ENCODE measurements at regions of chr10 and their contacts with region 1.

Region 1: DNA sequence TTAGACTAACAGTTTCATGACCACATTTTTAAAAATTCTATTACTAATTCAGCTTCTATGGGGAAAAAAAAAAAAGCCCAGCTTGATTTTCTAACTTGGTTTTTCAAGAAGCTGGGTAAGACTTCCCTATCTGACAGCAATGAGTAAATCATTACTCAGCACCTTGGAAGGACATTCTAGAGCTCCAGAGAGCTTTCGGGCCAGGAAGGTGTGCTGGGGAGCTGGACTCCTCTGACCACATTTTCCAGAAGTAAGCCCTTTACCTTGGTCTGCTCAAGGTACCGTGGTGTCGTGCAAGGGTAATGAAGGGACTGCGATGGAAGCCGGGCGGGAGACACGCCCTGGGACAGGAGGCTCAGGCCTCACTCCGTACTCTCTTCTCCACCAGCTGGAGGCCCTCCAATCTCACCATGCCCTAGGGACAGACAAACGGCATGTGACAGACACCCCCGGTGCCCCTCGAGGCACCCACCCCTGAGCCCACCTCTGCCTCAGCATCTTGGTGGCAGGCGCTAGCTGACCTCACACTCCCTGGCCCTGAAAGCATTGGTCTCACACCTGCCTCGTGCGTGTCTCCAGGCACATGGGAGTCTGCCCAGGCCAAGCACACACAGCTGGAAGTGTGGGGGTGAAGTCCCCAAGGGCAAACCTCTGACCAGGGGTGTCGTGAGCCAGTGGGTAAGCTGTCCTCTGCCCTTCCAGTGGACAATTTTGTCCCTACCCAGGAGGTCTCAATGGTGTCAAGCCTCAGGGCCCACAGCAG is 152.1 kb downstream of the OAT start:
- DNase-seq: no peak
- H3K4me3 ChIP-seq: no peak overlapping the region
- H3K27ac ChIP-seq: no peak overlapping the region
- H3K4me1 ChIP-seq: no peaks in the 10 kb centered on the region
- H3K27me3 ChIP-seq: no peaks in the 10 kb centered on the region
- CTCF ChIP-seq: no peak

Region 2: GRCh38 chr10:124083047-124083739 is 183.5 kb before region 1 on chr10:
- CTCF ChIA-PET with region 1: no interaction called
- POLR2A ChIA-PET with region 1: interaction called, 11 read pairs
- intact Hi-C with region 1: no loop called
- DNase-seq: no peak
- H3K4me3 ChIP-seq: no peak overlapping the region
- H3K27ac ChIP-seq: no peak overlapping the region
- H3K4me1 ChIP-seq: no peaks in the 10 kb centered on the region
- H3K27me3 ChIP-seq: no peaks in the 10 kb centered on the region
- CTCF ChIP-seq: no peak

Region 3: GRCh38 chr10:124157271-124157681 is 109.4 kb before region 1 on chr10:
- CTCF ChIA-PET with region 1: no interaction called
- POLR2A ChIA-PET with region 1: no interaction called
- intact Hi-C with region 1: no loop called
- DNase-seq: no peak
- H3K4me3 ChIP-seq: no peak overlapping the region
- H3K27ac ChIP-seq: no peak overlapping the region
- H3K4me1 ChIP-seq: peaks cover 33% of the 10 kb centered on the region
- H3K27me3 ChIP-seq: no peaks in the 10 kb centered on the region
- CTCF ChIP-seq: no peak

Region 4: GRCh38 chr10:124221356-124222317 is 45.0 kb before region 1 on chr10:
- CTCF ChIA-PET with region 1: no interaction called
- POLR2A ChIA-PET with region 1: no interaction called
- intact Hi-C with region 1: no loop called
- DNase-seq: no peak
- H3K4me3 ChIP-seq: no peak overlapping the region
- H3K27ac ChIP-seq: no peak overlapping the region
- H3K4me1 ChIP-seq: no peaks in the 10 kb centered on the region
- H3K27me3 ChIP-seq: no peaks in the 10 kb centered on the region
- CTCF ChIP-seq: no peak

Region 5: GRCh38 chr10:124323111-124323886 is 56.6 kb after region 1 on chr10:
- CTCF ChIA-PET with region 1: no interaction called
- POLR2A ChIA-PET with region 1: no interaction called
- intact Hi-C with region 1: no loop called
- DNase-seq: no peak
- H3K4me3 ChIP-seq: no peak overlapping the region
- H3K27ac ChIP-seq: no peak overlapping the region
- H3K4me1 ChIP-seq: no peaks in the 10 kb centered on the region
- H3K27me3 ChIP-seq: no peaks in the 10 kb centered on the region
- CTCF ChIP-seq: no peak